ENCODE measurements at regions of chr5 and their contacts with region 1.

Region 1: GRCh38 chr5:140157032-140157803 is 17.8 kb upstream of the CYSTM1 start:
- DNase-seq: peak; percentile 88 to 93 (median 90)
- ATAC-seq: peak; percentile 93 to 96 (median 96)
- H3K4me3 ChIP-seq: peak overlapping the region in 11 of 12 donors; percentile 15 to 57 (median 48)
- H3K27ac ChIP-seq: peak overlapping the region in 11 of 12 donors; percentile 11 to 71 (median 43)
- H3K4me1 ChIP-seq: peaks cover 0 to 19% (median 9%) of the 10 kb centered on the region in 12 donors
- H3K27me3 ChIP-seq: no peaks in the 10 kb centered on the region
- CTCF ChIP-seq: peak; percentile 85 to 93 (median 90)
- POLR2A ChIP-seq: no peak

Region 2: DNA sequence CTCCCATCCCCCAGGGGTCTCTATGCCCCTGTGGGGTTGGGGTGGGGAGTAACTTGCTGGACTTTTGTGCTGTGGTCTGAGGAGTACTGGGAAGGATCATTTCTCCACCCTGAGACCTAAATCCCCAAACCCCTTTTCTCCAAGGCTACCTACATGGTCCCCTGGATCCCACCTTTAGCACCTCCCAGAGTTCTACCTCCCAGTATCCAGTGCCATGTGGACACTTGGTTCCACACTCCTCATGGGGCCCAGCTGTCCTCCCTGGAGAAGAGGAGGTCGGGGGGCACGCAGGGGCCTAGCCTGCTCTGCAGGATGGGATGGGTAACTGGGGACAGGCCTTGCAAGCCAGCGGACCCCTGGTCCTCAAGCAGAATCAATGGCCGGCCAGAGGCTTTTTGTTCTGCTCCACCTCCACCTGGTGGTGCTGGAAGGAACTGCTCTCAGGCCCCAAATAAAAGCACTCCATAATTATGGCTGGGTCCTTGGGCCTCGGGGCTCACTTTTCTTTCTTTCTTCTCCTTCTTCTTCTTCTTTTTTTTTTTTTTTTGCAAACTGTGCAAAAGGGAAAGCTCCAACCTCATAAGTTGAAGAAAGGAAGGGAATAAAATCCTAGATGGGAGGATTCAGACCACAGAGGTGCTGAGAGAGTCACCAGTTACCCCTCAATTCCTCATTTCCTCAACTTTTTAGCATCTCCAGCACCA is 293.2 kb before region 1 on chr5:
- intact Hi-C with region 1: loop called in 2 of 10 experiments (anchors 10 kb)
- DNase-seq: peak; percentile 51 to 73 (median 67)
- ATAC-seq: peak; percentile 37 to 79 (median 64)
- H3K4me3 ChIP-seq: no peak overlapping the region
- H3K27ac ChIP-seq: peak overlapping the region in 3 of 12 donors; percentile 12 to 34 (median 30)
- H3K4me1 ChIP-seq: peaks cover 0 to 16% (median 11%) of the 10 kb centered on the region in 12 donors
- H3K27me3 ChIP-seq: no peaks in the 10 kb centered on the region
- CTCF ChIP-seq: peak; percentile 73 to 94 (median 89)
- POLR2A ChIP-seq: no peak

Region 3: GRCh38 chr5:140073296-140073695 is 83.9 kb before region 1 on chr5:
- intact Hi-C with region 1: loop called (anchors 1 to 5 kb)
- DNase-seq: no peak
- ATAC-seq: no peak
- H3K4me3 ChIP-seq: peak overlapping the region in 2 of 12 donors; percentile 2 to 10
- H3K27ac ChIP-seq: no peak overlapping the region
- H3K4me1 ChIP-seq: peaks cover 0 to 3% (median 0%) of the 10 kb centered on the region in 12 donors
- H3K27me3 ChIP-seq: peaks cover 0 to 4% (median 0%) of the 10 kb centered on the region in 9 donors
- CTCF ChIP-seq: peak; percentile 47 to 83 (median 74)
- POLR2A ChIP-seq: no peak

Region 4: DNA sequence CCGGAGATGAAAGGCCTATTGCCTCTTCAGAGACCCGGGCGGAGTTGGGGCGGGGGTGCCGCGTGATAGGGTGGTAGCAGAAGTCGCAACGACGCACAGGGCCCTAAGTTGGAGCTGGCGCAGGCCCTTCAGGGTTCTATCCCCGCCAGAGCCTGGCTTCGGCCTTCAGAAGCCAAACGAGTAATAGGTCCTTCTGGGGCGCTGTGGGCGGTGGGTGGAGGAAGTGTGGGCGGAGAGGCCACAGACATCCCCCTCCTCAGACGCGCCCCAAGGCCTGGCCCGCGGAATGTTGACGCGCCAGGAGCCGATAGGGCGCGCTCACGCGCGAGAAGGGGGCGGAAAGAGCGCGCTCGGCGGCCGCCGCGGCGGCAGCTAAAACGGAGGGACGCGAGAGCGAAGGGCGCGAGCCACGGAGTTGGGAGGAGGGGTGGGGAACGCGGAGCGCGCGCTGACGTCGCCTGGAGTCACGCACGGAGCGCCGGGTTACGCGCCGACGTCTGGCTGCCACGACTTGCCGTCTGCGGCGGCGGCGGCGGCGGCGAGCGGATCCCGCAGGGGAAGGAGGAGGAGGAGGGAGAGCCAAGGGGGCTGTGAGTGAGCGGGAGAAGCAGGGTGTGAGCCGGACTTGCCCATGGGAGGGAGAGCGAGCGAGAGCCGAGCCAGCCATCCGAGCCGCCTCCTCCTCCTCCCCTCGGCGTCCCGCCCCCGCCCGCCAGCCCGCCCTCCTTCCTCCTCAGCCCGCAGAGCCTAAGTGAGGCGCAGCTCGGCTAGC is 49.7 kb before region 1 on chr5:
- intact Hi-C with region 1: loop called in 1 of 10 experiments (anchors 5 kb)
- DNase-seq: peak; percentile 94 to 97 (median 95)
- ATAC-seq: peak; percentile 92 to 98 (median 98)
- H3K4me3 ChIP-seq: peak overlapping the region; percentile 41 to 87 (median 74)
- H3K27ac ChIP-seq: peak overlapping the region; percentile 95 to 100 (median 98)
- H3K4me1 ChIP-seq: peaks cover under 1 to 52% (median 28%) of the 10 kb centered on the region in 12 donors
- H3K27me3 ChIP-seq: peaks cover 0 to 12% (median 0%) of the 10 kb centered on the region in 9 donors
- CTCF ChIP-seq: peak in 9 of 12 donors; percentile 17 to 52 (median 39)
- POLR2A ChIP-seq: peak; percentile 5 to 89

Measured in heart left ventricle (tissue), 16 donors.